ENCODE measurements at regions of chr10 and their contacts with region 1.

Region 1: GRCh38 chr10:47311932-47312662 is 10.2 kb upstream of the GDF2 start:
- DNase-seq: peak; percentile 79 to 80 (median 79)
- ATAC-seq: peak; percentile 93
- H3K4me3 ChIP-seq: no peak overlapping the region
- H3K27ac ChIP-seq: no peak overlapping the region
- H3K4me1 ChIP-seq: peaks cover 13 to 27% of the 10 kb centered on the region in 2 experiments; a peak in 4 of 5 replicates
- H3K27me3 ChIP-seq: peaks cover 0 to 6% of the 10 kb centered on the region in 2 experiments; a peak in 3 of 5 replicates
- CTCF ChIP-seq: peak; percentile 90 to 93 (median 91)
- EP300 ChIP-seq: no peak
- POLR2A ChIP-seq: no peak
- RAD21 ChIP-seq: peak; percentile 90 to 95

Region 2: DNA sequence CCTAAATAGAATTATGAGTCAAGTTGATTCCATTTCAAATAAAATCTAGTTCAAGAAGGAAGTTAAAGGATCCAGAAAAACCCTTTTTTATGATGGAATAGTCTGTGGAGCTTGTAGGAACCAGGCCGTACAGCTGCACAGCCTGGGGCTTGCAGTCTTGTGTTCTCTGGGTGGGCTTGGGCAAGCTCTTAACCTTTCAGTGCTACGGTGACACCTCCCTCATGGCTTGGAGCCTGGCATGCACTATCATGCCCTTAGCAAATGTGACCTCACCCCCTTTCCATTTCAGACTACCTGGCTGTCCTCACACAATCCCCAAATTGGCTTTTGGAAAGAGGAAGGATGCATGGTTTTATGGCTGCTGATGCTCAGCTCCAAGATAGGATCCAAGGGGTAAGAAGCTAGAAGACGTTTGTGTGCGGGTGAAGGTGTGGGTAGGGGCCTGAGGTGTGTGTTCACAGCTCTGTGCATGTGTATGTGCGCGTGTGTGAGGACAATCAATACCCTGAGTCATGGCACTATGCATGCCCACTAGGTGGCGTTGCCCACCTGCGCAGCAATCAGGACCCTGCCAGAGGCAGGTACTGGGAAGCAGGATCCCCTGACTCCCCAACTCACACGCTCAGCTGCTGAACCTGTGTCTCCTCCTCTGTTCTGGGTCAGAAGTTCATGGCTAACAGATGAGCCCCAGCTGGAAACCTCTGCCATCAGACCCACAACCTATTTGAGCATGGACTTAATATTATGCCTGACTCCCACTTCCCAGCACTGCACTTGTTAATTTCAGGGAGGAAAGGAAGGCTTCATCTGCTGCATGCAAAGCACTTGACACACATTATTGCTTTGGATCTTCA is 287.5 kb before region 1 on chr10:
- CTCF ChIA-PET with region 1: interaction called, 6 read pairs
- POLR2A ChIA-PET with region 1: no interaction called
- in situ Hi-C with region 1: no loop called
- intact Hi-C with region 1: loop called (anchors 2 kb)
- DNase-seq: peak; percentile 70 to 88 (median 84)
- ATAC-seq: peak; percentile 93
- H3K4me3 ChIP-seq: no peak overlapping the region
- H3K27ac ChIP-seq: no peak overlapping the region
- H3K4me1 ChIP-seq: peaks cover 3 to 6% of the 10 kb centered on the region in 2 experiments; a peak in 1 of 5 replicates
- H3K27me3 ChIP-seq: peaks cover 0 to 39% of the 10 kb centered on the region in 2 experiments; a peak in 2 of 5 replicates
- CTCF ChIP-seq: peak; percentile 84 to 91 (median 88)
- EP300 ChIP-seq: no peak
- POLR2A ChIP-seq: no peak
- RAD21 ChIP-seq: peak; percentile 57 to 80

Region 3: DNA sequence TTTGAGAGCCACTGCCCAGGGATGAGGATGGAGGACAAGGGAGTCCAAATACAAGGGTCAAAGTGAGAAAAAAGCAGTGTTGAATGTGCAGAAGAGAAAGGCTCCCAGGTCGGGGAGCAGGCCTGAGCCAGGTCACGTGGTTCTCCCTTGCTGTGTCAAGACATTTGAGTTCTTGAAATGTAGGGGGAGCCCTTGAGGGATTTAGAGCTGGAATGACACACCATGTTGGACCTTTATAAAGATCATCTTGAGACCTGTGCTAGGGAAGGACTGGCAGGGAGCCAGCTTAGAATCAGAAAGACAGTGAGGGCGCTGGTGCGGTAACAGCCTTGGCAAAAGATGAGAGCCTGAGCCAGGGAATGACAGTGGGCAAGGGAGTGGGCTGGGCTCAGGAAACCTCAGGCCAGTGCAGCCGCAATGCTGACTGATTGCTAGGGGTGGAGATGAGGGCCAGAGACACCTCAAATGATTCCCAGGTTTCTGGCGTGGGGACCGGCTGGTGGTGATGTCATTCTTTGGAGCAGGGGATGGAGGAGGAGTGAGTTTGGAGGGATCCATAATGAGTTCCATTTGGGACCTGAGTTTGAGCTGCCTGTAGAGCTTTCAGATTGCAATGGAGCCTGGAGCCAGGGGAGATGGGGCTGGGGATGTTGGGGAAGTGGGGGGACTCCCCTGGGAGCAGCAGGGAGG is 280.7 kb before region 1 on chr10:
- CTCF ChIA-PET with region 1: no interaction called
- POLR2A ChIA-PET with region 1: no interaction called
- in situ Hi-C with region 1: loop called (anchors 10 kb)
- intact Hi-C with region 1: no loop called
- DNase-seq: peak; percentile 68 to 79 (median 76)
- ATAC-seq: peak; percentile 90
- H3K4me3 ChIP-seq: no peak overlapping the region
- H3K27ac ChIP-seq: no peak overlapping the region
- H3K4me1 ChIP-seq: no peaks in the 10 kb centered on the region
- H3K27me3 ChIP-seq: peaks cover 6 to 60% of the 10 kb centered on the region in 2 experiments; a peak in 3 of 5 replicates
- CTCF ChIP-seq: peak; percentile 49 to 73 (median 59)
- EP300 ChIP-seq: no peak
- POLR2A ChIP-seq: no peak
- RAD21 ChIP-seq: no peak

Region 4: DNA sequence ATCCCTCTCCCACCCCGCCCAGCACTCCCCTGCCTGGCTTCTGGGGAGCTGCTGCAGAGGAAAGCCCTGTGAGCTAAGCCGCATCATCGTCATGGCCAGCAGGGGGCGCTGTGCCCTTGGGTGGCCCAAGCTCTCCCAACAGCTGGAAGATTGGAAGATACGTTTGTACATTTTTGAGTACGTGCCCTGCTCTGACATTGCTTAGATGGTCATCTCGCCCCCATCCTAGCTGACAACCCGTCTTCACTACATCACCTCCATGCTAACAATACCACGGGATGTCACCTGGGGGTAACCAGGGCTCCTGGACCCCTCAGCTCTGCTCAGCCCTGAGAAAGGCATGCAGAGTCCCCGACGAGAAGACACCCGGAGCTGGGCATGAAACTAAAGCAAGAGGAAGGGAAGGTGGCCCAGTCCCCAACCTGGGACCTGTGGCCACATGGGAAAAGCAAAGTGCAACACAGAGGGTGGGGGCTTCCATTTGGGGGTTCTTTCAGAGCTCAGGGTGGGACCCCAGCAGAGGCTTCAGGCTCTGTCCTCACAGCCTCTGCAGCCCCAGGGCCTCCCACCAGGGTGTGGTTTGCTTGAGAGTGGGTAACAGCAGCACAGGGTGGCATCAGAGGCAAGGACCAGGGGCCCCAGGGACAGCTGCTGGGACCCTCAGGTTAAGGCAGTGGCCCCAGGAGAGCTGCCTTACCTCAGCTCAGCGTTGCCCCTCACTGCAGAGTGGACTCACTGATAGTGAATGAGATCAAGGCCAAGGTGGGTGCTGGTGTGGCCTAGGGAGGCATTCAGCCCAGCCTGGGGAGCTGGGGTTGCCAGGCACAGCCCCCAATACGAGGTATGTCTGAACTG is 264.2 kb before region 1 on chr10:
- CTCF ChIA-PET with region 1: interaction called, 10 read pairs
- POLR2A ChIA-PET with region 1: interaction called, 3 read pairs
- in situ Hi-C with region 1: no loop called
- intact Hi-C with region 1: loop called (anchors 1 kb)
- DNase-seq: peak; percentile 80 to 89 (median 86)
- ATAC-seq: peak; percentile 96
- H3K4me3 ChIP-seq: no peak overlapping the region
- H3K27ac ChIP-seq: no peak overlapping the region
- H3K4me1 ChIP-seq: peaks cover 0 to 4% of the 10 kb centered on the region in 2 experiments; a peak in 1 of 5 replicates
- H3K27me3 ChIP-seq: peaks cover 6 to 40% of the 10 kb centered on the region in 2 experiments; a peak in 3 of 5 replicates
- CTCF ChIP-seq: peak; percentile 88 to 95 (median 94)
- EP300 ChIP-seq: no peak
- POLR2A ChIP-seq: no peak
- RAD21 ChIP-seq: peak; percentile 78 to 91

Region 5: GRCh38 chr10:47261121-47261520 is 51.0 kb before region 1 on chr10:
- CTCF ChIA-PET with region 1: interaction called, 3 read pairs
- POLR2A ChIA-PET with region 1: no interaction called
- in situ Hi-C with region 1: no loop called
- intact Hi-C with region 1: loop called (anchors 5 kb)
- DNase-seq: no peak
- ATAC-seq: no peak
- H3K4me3 ChIP-seq: no peak overlapping the region
- H3K27ac ChIP-seq: no peak overlapping the region
- H3K4me1 ChIP-seq: peaks cover 0 to 4% of the 10 kb centered on the region in 2 experiments; a peak in 1 of 5 replicates
- H3K27me3 ChIP-seq: peaks cover 6 to 25% of the 10 kb centered on the region in 2 experiments; a peak in 4 of 5 replicates
- CTCF ChIP-seq: no peak
- EP300 ChIP-seq: no peak
- POLR2A ChIP-seq: no peak
- RAD21 ChIP-seq: no peak

Region 6: GRCh38 chr10:47277352-47278151 is 34.5 kb before region 1 on chr10:
- CTCF ChIA-PET with region 1: no interaction called
- POLR2A ChIA-PET with region 1: no interaction called
- in situ Hi-C with region 1: no loop called
- intact Hi-C with region 1: no loop called
- DNase-seq: no peak
- ATAC-seq: no peak
- H3K4me3 ChIP-seq: no peak overlapping the region
- H3K27ac ChIP-seq: no peak overlapping the region
- H3K4me1 ChIP-seq: peaks cover 0 to 5% of the 10 kb centered on the region in 2 experiments; a peak in 2 of 5 replicates
- H3K27me3 ChIP-seq: peaks cover 5 to 40% of the 10 kb centered on the region in 2 experiments; a peak in 3 of 5 replicates
- CTCF ChIP-seq: no peak
- EP300 ChIP-seq: no peak
- POLR2A ChIP-seq: no peak
- RAD21 ChIP-seq: no peak

Region 7: GRCh38 chr10:47322300-47323061 is 10.4 kb after region 1 on chr10 and contains the start of gene GDF2:
- CTCF ChIA-PET with region 1: interaction called, 3 read pairs
- POLR2A ChIA-PET with region 1: interaction called, 11 read pairs
- in situ Hi-C with region 1: no loop called
- intact Hi-C with region 1: no loop called
- DNase-seq: peak; percentile 44 to 73 (median 58)
- ATAC-seq: peak; percentile 64
- H3K4me3 ChIP-seq: no peak within 1 kb of the TSS
- H3K27ac ChIP-seq: no peak within 1 kb of the TSS
- H3K4me1 ChIP-seq: peaks cover 40 to 41% of the 10 kb centered on the region in 2 experiments
- H3K27me3 ChIP-seq: no peaks in the 10 kb centered on the region
- CTCF ChIP-seq: no peak
- EP300 ChIP-seq: peak; percentile 82
- POLR2A ChIP-seq: no peak
- RAD21 ChIP-seq: no peak
- polyA plus RNA-seq, gene GDF2: not detected

Region 8: DNA sequence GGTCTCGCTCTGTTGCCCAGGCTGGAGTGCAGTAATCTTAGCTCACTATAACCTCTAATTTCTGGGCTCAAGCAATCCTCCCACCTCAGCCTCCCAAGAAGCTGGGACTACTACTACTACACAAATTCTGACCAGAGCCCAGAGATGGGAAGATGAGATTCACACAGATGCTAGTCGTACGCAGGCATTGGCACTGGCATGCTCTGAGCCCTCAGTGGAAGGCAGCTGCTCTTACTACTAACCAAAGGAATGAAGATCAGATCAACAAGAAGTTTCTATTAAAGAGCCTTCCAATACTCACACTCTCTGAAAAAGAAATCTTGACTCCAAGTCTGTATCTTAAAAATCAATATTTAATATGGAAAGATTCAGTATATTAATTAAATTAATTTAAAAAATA is 20.8 kb after region 1 on chr10:
- CTCF ChIA-PET with region 1: no interaction called
- POLR2A ChIA-PET with region 1: no interaction called
- in situ Hi-C with region 1: no loop called
- intact Hi-C with region 1: no loop called
- DNase-seq: no peak
- ATAC-seq: no peak
- H3K4me3 ChIP-seq: no peak overlapping the region
- H3K27ac ChIP-seq: no peak overlapping the region
- H3K4me1 ChIP-seq: peaks cover 24 to 34% of the 10 kb centered on the region in 2 experiments
- H3K27me3 ChIP-seq: no peaks in the 10 kb centered on the region; a peak in 1 of 5 replicates
- CTCF ChIP-seq: no peak
- EP300 ChIP-seq: no peak
- POLR2A ChIP-seq: no peak
- RAD21 ChIP-seq: no peak

Measured in K562 (cell line).